ENCODE measurements at regions of chr5 and their contacts with region 1.

Region 1: GRCh38 chr5:64768358-64769312 is at the starts of genes CWC27 and SREK1IP1:
- DNase-seq: peak; percentile 90
- H3K4me3 Mint-ChIP-seq: peak within 1 kb of the TSS; percentile 99
- H3K27ac Mint-ChIP-seq: peak within 1 kb of the TSS; percentile 97
- H3K4me1 Mint-ChIP-seq: peaks cover 53% of the 10 kb centered on the region
- H3K27me3 Mint-ChIP-seq: no peaks in the 10 kb centered on the region
- total RNA-seq, gene CWC27: 35.8 to 39.8 TPM
- total RNA-seq, gene SREK1IP1: 16.7 to 17.6 TPM

Region 2: GRCh38 chr5:64690417-64691151 is 78.1 kb before region 1 on chr5 and contains the start of gene SHISAL2B:
- CTCF ChIA-PET with region 1: no interaction called
- intact Hi-C with region 1: loop called (anchors 1 kb)
- DNase-seq: no peak
- H3K4me3 Mint-ChIP-seq: peak within 1 kb of the TSS; percentile 27
- H3K27ac Mint-ChIP-seq: no peak within 1 kb of the TSS
- H3K4me1 Mint-ChIP-seq: peaks cover 6% of the 10 kb centered on the region
- H3K27me3 Mint-ChIP-seq: peaks cover 24% of the 10 kb centered on the region
- total RNA-seq, gene SHISAL2B: not detected

Region 3: DNA sequence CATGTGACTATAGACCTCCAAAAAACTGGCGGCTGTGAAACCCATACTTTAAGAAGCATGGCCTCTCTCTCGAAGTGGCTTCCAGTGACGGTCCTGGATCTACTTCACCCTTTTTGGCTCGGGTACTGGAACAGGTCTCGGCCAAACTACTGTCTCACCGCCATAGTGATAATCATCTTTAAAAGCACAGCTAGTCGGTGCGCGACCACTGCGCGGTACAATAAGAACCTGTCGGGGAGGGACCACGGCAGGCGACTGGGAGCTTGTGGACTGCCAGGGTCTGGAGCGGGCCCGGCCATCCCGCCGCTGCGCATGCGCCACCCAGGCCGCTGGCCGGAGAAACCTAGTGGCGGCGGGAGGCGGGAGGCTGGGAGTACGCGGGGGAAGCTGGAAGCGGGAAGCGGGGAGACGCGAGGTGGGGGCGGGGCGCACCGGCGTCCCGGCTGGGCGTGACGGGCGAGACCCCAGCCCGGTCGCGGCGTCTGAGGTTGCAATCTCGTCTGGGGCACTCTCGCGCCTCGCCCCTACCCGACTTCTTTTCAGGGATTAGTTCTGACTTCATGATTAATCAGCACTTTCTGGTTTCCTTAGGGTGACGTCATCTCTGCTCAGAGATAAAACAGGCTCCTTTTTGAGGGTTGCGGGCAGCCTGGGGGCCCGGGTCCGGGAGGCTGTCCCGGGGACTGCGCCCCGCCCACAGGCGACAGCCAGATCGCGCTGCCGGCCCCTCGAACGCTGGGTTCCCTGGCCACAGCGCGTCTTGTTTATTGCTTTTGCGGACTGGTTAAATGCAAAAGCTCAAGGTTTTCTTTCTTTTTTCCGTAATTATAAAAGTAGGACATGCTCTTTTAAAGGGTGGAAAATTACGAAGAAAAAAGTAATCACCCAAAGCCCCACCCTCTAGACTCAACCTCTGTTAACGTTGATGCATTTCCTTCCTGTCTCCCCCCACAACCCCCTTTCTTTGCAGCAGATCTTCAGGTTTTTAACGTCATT is 266.9 kb after region 1 on chr5:
- CTCF ChIA-PET with region 1: no interaction called
- intact Hi-C with region 1: loop called (anchors 1 kb)
- DNase-seq: peak; percentile 80
- H3K4me3 Mint-ChIP-seq: peak overlapping the region; percentile 69
- H3K27ac Mint-ChIP-seq: peak overlapping the region; percentile 85
- H3K4me1 Mint-ChIP-seq: peaks cover 27% of the 10 kb centered on the region
- H3K27me3 Mint-ChIP-seq: no peaks in the 10 kb centered on the region

Region 4: GRCh38 chr5:65562731-65563701 is 794.4 kb after region 1 on chr5 and contains the starts of genes CENPK and PPWD1:
- CTCF ChIA-PET with region 1: no interaction called
- intact Hi-C with region 1: loop called (anchors 1 kb)
- DNase-seq: peak; percentile 98
- H3K4me3 Mint-ChIP-seq: peak within 1 kb of the TSS; percentile 98
- H3K27ac Mint-ChIP-seq: peak within 1 kb of the TSS; percentile 96
- H3K4me1 Mint-ChIP-seq: peaks cover 45% of the 10 kb centered on the region
- H3K27me3 Mint-ChIP-seq: no peaks in the 10 kb centered on the region
- total RNA-seq, gene CENPK: 80.9 to 83.1 TPM
- total RNA-seq, gene PPWD1: 33.6 to 33.9 TPM

Region 5: DNA sequence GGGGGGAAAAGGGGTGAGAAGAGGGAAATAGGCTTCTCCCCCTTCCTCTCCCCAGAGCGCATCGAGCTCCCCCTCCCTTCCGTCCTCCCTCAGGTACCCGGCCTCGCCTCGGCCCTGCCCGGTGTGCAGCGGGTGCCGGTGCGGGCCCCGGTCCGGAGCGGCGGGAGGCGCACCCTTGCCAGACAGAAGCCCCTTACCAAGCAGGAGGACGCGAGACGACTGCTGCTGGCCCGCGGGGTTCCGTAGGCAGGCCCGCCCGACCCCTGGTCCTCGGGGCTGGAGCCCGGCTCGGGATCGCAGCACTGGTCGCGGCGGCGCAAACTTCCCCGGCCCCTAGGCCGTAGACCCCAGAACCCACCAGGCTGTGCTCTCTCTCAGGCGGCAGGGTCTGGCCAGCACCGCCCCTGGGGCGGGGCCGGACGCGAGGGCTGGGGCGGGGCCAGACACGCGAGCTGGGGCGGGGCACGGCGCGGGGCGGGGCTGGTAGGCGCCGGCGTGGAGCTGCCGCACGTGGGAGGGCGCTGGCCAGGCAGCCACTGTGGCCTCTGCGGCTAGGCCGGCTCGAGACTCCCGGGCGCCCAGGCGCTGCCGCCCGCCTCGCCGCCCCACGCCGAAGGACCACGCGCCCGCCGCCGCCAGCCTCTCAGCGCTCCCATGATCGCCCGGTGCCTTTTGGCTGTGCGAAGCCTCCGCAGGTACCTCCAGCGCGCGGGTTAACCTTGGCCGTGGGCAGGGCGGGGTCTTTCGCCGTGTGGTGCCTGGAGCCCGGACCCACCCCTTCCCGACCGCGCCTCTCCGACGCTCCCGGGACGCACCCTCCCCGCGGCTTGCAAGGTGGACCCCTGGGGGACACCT is 953.3 kb after region 1 on chr5 and contains the starts of genes NLN and SGTB:
- CTCF ChIA-PET with region 1: no interaction called
- intact Hi-C with region 1: loop called (anchors 5 kb)
- DNase-seq: peak; percentile 80
- H3K4me3 Mint-ChIP-seq: peak within 1 kb of the TSS; percentile 88
- H3K27ac Mint-ChIP-seq: peak within 1 kb of the TSS; percentile 94
- H3K4me1 Mint-ChIP-seq: peaks cover 13% of the 10 kb centered on the region
- H3K27me3 Mint-ChIP-seq: no peaks in the 10 kb centered on the region
- total RNA-seq, gene NLN: 32.4 to 35.5 TPM
- total RNA-seq, gene SGTB: 16.1 to 17.3 TPM